Sciatic nerve (tissue), 2 donors: ENCODE measurements at regions of chr4 and their contacts with region 1.

Region 1: GRCh38 chr4:69787879-69788278 is 27.5 kb upstream of the SULT1B1 start:
- DNase-seq: no peak
- ATAC-seq: no peak

Region 2: GRCh38 chr4:69878250-69878649 is 90.4 kb after region 1 on chr4:
- intact Hi-C with region 1: loop called (anchors 2 kb)
- DNase-seq: no peak
- ATAC-seq: no peak

Region 3: GRCh38 chr4:69910016-69910782 is 122.3 kb after region 1 on chr4:
- intact Hi-C with region 1: no loop called
- DNase-seq: no peak
- ATAC-seq: peak; percentile 45